ENCODE measurements at regions of chr3 and their contacts with region 1.

Region 1: GRCh38 chr3:195876297-195877031 is 31.9 kb downstream of the TNK2 start:
- DNase-seq: no peak

Region 2: GRCh38 chr3:193872265-193872753 is 2004.2 kb before region 1 on chr3:
- intact Hi-C with region 1: loop called in 1 of 2 experiments (anchors 10 kb)
- DNase-seq: no peak

Region 3: GRCh38 chr3:195850857-195851543 is 25.5 kb before region 1 on chr3:
- intact Hi-C with region 1: no loop called
- DNase-seq: peak; percentile 90

Region 4: GRCh38 chr3:195956571-195956970 is 80.1 kb after region 1 on chr3:
- intact Hi-C with region 1: no loop called
- DNase-seq: peak; percentile 23

Measured in posterior vena cava (tissue), 2 donors.